Activated CD4-positive, alpha-beta memory T cell treated with anti-CD3 and anti-CD28 coated beads for 36 hours (primary cell): ENCODE measurements at regions of chr9 and their contacts with region 1.

Region 1: DNA sequence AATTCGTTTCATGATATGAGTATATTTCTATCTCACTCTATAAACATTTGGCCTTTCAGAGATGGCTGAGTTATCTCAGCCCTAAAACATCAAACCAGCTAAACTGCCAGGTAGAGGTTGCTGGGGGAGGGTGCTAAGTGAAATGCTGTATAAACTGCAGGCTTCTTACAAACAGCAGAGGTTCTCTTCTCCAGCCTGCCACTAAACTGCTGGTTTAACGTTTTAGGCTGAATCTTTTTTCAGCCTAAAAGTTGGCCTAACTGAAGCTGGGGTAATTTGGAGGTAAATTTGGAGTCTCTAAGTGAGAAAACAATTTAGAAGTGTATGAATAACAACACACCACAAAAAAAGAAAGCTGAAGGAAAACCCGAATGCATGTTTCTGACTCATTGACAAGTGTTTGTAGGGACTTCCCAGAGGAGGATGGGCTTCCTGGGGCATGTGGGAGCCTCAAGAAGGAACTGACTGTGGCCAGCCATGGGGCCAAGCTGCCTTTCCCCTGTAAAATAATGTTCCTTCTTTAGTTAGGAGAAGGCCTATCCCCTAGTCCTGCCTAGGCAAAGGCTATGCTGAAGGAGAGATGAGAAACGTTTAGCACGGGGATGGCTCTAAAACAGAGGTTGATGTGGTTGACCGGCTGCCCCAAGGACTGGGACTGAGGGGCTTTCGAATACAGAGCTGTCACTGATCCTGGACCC is 44.3 kb downstream of the SLC28A3 start:
- DNase-seq: peak; percentile 78
- H3K4me3 Mint-ChIP-seq: peak overlapping the region; percentile 49
- H3K27ac Mint-ChIP-seq: peak overlapping the region; percentile 98
- H3K4me1 Mint-ChIP-seq: peaks cover 58% of the 10 kb centered on the region
- H3K27me3 Mint-ChIP-seq: no peaks in the 10 kb centered on the region

Region 2: GRCh38 chr9:83707768-83708514 is 588.4 kb before region 1 on chr9 and contains the start of gene UBQLN1:
- CTCF ChIA-PET with region 1: no interaction called
- POLR2A ChIA-PET with region 1: interaction called, 3 read pairs
- intact Hi-C with region 1: loop called (anchors 1 kb)
- DNase-seq: peak; percentile 94
- H3K4me3 Mint-ChIP-seq: peak within 1 kb of the TSS; percentile 87
- H3K27ac Mint-ChIP-seq: peak within 1 kb of the TSS; percentile 99
- H3K4me1 Mint-ChIP-seq: peaks cover 45% of the 10 kb centered on the region
- H3K27me3 Mint-ChIP-seq: no peaks in the 10 kb centered on the region
- total RNA-seq, gene UBQLN1: 88.8 to 101 TPM

Region 3: GRCh38 chr9:83956434-83957247 is 339.7 kb before region 1 on chr9:
- CTCF ChIA-PET with region 1: no interaction called
- POLR2A ChIA-PET with region 1: no interaction called
- intact Hi-C with region 1: loop called (anchors 5 kb)
- DNase-seq: peak; percentile 78
- H3K4me3 Mint-ChIP-seq: peak overlapping the region; percentile 96
- H3K27ac Mint-ChIP-seq: peak overlapping the region; percentile 92
- H3K4me1 Mint-ChIP-seq: peaks cover 18% of the 10 kb centered on the region
- H3K27me3 Mint-ChIP-seq: no peaks in the 10 kb centered on the region

Region 4: GRCh38 chr9:84111726-84112125 is 184.6 kb before region 1 on chr9:
- CTCF ChIA-PET with region 1: no interaction called
- POLR2A ChIA-PET with region 1: no interaction called
- intact Hi-C with region 1: no loop called
- DNase-seq: no peak
- H3K4me3 Mint-ChIP-seq: no peak overlapping the region
- H3K27ac Mint-ChIP-seq: no peak overlapping the region
- H3K4me1 Mint-ChIP-seq: peaks cover 17% of the 10 kb centered on the region
- H3K27me3 Mint-ChIP-seq: peaks cover 7% of the 10 kb centered on the region

Region 5: GRCh38 chr9:84230355-84231145 is 65.7 kb before region 1 on chr9:
- CTCF ChIA-PET with region 1: no interaction called
- POLR2A ChIA-PET with region 1: no interaction called
- intact Hi-C with region 1: no loop called
- DNase-seq: no peak
- H3K4me3 Mint-ChIP-seq: no peak overlapping the region
- H3K27ac Mint-ChIP-seq: no peak overlapping the region
- H3K4me1 Mint-ChIP-seq: no peaks in the 10 kb centered on the region
- H3K27me3 Mint-ChIP-seq: no peaks in the 10 kb centered on the region

Region 6: DNA sequence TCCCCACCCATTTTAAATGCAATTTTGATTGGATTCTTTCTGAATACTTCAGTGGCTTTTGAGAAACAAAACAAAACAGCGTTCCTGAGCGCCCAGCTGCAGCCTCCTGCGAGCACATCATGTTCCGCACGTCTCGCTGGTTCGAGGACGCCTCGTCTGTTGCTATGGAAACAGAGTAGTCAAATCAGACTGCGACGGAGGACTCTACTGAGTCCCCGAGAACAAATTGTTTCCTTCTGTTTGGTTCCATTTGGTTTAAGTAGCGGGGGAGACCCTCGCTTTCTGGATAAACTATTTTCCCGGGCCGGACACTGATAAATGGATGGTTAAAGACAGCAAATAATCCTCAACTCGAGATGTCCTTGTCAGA is 24.8 kb before region 1 on chr9:
- CTCF ChIA-PET with region 1: interaction called, 7 read pairs
- POLR2A ChIA-PET with region 1: no interaction called
- intact Hi-C with region 1: loop called (anchors 1 kb)
- DNase-seq: peak; percentile 70
- H3K4me3 Mint-ChIP-seq: peak overlapping the region; percentile 66
- H3K27ac Mint-ChIP-seq: no peak overlapping the region
- H3K4me1 Mint-ChIP-seq: peaks cover 10% of the 10 kb centered on the region
- H3K27me3 Mint-ChIP-seq: peaks cover 42% of the 10 kb centered on the region

Region 7: GRCh38 chr9:84315278-84315877 is 19.1 kb after region 1 on chr9:
- CTCF ChIA-PET with region 1: interaction called, 47 read pairs
- POLR2A ChIA-PET with region 1: no interaction called
- intact Hi-C with region 1: loop called (anchors 1 kb)
- DNase-seq: peak; percentile 70
- H3K4me3 Mint-ChIP-seq: no peak overlapping the region
- H3K27ac Mint-ChIP-seq: no peak overlapping the region
- H3K4me1 Mint-ChIP-seq: peaks cover 6% of the 10 kb centered on the region
- H3K27me3 Mint-ChIP-seq: no peaks in the 10 kb centered on the region

Region 8: DNA sequence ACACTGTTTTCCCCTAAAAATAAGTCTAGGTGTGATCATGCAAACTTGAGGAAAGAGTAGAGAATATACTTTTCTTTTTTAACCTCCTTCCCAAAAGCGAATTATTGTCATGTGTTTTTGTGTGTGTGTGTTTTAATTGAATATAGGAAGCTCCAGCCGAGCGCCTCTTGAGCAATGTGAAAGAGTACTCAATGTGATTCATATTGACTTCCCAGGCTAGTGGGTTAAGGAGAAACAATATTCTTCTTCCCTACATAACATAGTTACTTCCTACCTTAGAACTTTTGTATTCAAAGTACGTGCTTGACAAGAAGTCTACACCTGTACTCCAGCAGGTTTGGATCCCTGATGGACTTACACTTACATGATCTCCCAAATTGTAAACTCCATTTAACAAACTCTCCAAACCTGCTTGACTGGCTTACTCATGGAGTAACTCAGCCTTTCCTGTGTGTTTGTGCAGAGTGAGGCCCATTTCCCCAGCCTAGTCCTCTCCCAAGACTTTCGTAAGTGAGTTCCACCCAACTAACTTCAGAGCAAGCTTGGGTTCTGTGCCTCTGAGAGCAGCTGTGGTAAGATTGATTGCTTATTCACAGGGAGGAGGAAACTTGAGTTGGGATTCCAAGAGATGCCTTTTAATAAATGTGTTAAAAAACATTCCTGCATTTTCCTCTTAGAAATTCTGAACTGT is 35.0 kb after region 1 on chr9:
- CTCF ChIA-PET with region 1: no interaction called
- POLR2A ChIA-PET with region 1: no interaction called
- intact Hi-C with region 1: no loop called
- DNase-seq: no peak
- H3K4me3 Mint-ChIP-seq: no peak overlapping the region
- H3K27ac Mint-ChIP-seq: no peak overlapping the region
- H3K4me1 Mint-ChIP-seq: no peaks in the 10 kb centered on the region
- H3K27me3 Mint-ChIP-seq: no peaks in the 10 kb centered on the region

Region 9: GRCh38 chr9:84759300-84759750 is 463.0 kb after region 1 on chr9:
- CTCF ChIA-PET with region 1: no interaction called
- POLR2A ChIA-PET with region 1: no interaction called
- intact Hi-C with region 1: loop called (anchors 5 kb)
- DNase-seq: peak; percentile 65
- H3K4me3 Mint-ChIP-seq: peak overlapping the region; percentile 6
- H3K27ac Mint-ChIP-seq: peak overlapping the region; percentile 74
- H3K4me1 Mint-ChIP-seq: peaks cover 47% of the 10 kb centered on the region
- H3K27me3 Mint-ChIP-seq: no peaks in the 10 kb centered on the region

Region 10: DNA sequence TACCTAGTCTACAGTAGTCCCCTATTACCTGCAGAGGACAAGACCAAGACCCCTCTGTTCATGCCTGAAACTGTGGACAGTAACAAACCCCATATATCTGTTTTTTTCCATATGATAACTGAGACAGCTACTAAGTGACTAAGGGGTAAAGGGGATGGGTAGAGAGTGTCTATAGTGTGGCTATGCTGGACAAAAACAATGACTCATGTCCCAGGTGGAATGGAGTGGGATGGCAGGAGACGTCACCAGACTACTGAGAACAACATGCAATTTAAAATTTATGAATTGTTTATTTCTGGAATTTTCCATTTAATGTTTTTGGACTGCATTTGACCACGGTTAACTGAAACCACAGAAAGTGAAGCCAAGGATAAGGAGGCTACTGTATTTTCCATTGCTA is 1273.7 kb after region 1 on chr9:
- CTCF ChIA-PET with region 1: no interaction called
- POLR2A ChIA-PET with region 1: no interaction called
- intact Hi-C with region 1: no loop called
- DNase-seq: no peak
- H3K4me3 Mint-ChIP-seq: no peak overlapping the region
- H3K27ac Mint-ChIP-seq: no peak overlapping the region
- H3K4me1 Mint-ChIP-seq: no peaks in the 10 kb centered on the region
- H3K27me3 Mint-ChIP-seq: no peaks in the 10 kb centered on the region